ENCODE measurements at regions of chr1 and their contacts with region 1.

Region 1: DNA sequence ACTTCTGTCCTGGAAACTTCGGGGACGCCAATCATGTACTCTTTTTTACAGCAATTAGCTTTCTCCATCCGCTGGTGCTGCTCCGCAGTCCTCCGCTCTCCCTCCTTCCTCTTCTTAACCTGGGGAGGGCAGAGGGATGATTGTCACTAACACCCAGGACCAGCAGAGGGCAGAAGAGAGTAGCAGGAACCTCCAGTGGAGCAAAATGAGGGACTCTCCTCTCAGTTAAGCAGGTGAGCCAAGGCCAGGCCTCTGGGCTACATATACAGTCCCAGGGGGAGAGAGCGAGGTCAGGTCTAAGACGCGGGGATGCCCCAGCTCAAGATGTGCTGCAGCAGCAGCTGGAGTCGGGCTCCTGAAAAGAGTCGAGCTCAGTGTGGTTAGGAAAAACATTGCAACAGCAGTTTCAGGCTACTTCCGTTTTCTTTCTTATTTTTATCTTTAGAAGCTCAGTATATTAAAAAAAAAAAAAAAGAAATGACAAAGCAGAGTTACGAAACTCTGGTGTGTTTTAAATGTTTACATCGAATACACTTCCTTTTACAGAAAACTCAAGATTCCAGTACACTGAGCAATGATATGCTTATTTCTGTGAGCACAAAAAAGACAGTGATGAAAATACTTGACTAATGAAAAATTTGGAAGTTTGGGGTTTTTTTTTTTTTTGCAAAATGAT is 25.7 kb upstream of the NLRP3 start:
- DNase-seq: peak; percentile 96
- H3K4me3 Mint-ChIP-seq: peak overlapping the region; percentile 17
- H3K27ac Mint-ChIP-seq: peak overlapping the region; percentile 3
- H3K4me1 Mint-ChIP-seq: peaks cover 25% of the 10 kb centered on the region
- H3K27me3 Mint-ChIP-seq: no peaks in the 10 kb centered on the region
- CTCF ChIP-seq: peak; percentile 99

Region 2: DNA sequence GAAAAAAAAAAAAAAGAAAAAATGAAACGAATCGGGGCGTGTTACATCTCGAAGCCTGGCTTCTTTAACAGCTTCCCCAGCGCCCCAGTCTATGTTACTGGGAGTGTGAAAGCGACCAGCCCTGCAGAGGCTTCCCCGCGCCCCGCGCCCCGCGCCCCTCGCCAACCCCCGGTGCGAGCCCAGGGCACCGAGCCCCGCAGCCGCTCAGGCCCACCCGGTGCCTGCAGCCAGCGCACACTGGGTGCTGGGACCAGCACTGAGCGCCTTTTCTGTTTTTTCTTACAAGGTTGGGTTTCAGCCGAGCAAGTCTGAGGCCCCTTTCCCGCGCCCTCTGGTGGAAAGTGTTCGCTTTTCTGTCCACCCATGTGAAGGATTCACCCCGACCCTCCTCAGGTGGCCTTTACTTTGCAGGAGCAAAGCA is 16.5 kb before region 1 on chr1:
- CTCF ChIA-PET with region 1: interaction called, 143 read pairs
- POLR2A ChIA-PET with region 1: interaction called, 6 read pairs
- intact Hi-C with region 1: no loop called
- DNase-seq: peak; percentile 70
- H3K4me3 Mint-ChIP-seq: peak overlapping the region; percentile 3
- H3K27ac Mint-ChIP-seq: no peak overlapping the region
- H3K4me1 Mint-ChIP-seq: peaks cover 5% of the 10 kb centered on the region
- H3K27me3 Mint-ChIP-seq: no peaks in the 10 kb centered on the region
- CTCF ChIP-seq: peak; percentile 44

Region 3: GRCh38 chr1:247421074-247421473 is 30.8 kb after region 1 on chr1:
- CTCF ChIA-PET with region 1: interaction called, 58 read pairs
- POLR2A ChIA-PET with region 1: interaction called, 6 read pairs
- intact Hi-C with region 1: no loop called
- DNase-seq: peak; percentile 23
- H3K4me3 Mint-ChIP-seq: no peak overlapping the region
- H3K27ac Mint-ChIP-seq: peak overlapping the region; percentile 24
- H3K4me1 Mint-ChIP-seq: peaks cover 12% of the 10 kb centered on the region
- H3K27me3 Mint-ChIP-seq: no peaks in the 10 kb centered on the region
- CTCF ChIP-seq: no peak

Region 4: DNA sequence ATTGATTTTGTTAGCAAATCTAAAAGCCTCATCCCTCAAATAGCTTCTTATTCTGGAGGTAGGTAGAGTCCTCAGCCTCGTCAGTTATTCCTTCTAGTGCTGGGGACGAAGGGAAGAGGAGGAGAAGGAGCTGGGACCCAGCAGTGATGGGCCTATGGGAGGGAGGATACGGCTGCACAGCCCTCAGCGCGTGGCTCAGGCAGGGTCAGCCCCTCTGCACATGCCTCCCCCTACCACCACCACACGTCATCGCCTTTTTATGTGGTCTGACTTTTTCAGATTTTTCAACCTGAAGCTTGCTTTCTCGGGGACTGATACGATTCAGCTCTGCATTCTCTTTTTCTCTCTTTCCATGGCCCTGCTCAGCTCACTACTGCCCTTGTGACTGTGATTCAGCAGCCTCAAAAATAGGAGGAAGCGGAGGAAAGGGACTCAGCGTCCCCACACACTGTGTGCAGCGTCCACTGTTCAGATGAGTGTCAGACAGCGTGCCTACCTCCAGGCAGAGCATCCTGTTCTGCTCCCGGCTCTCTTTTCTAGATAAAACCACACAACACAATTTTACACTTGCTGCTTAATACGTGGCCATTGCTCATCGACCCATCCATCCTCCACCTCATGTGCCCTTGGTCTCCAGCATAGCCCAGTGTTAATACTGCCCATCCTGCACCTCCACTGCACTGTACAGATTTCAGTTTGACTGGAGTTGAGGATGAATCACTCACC is 66.8 kb after region 1 on chr1:
- CTCF ChIA-PET with region 1: interaction called, 42 read pairs
- POLR2A ChIA-PET with region 1: interaction called, 5 read pairs
- intact Hi-C with region 1: no loop called
- DNase-seq: no peak
- H3K4me3 Mint-ChIP-seq: no peak overlapping the region
- H3K27ac Mint-ChIP-seq: no peak overlapping the region
- H3K4me1 Mint-ChIP-seq: peaks cover 10% of the 10 kb centered on the region
- H3K27me3 Mint-ChIP-seq: peaks cover 21% of the 10 kb centered on the region
- CTCF ChIP-seq: no peak

Region 5: GRCh38 chr1:247487057-247487456 is 96.8 kb after region 1 on chr1:
- CTCF ChIA-PET with region 1: interaction called, 697 read pairs
- POLR2A ChIA-PET with region 1: interaction called, 34 read pairs
- intact Hi-C with region 1: loop called (anchors 1 kb)
- DNase-seq: peak; percentile 76
- H3K4me3 Mint-ChIP-seq: no peak overlapping the region
- H3K27ac Mint-ChIP-seq: no peak overlapping the region
- H3K4me1 Mint-ChIP-seq: peaks cover 11% of the 10 kb centered on the region
- H3K27me3 Mint-ChIP-seq: peaks cover 45% of the 10 kb centered on the region
- CTCF ChIP-seq: peak; percentile 84

Region 6: DNA sequence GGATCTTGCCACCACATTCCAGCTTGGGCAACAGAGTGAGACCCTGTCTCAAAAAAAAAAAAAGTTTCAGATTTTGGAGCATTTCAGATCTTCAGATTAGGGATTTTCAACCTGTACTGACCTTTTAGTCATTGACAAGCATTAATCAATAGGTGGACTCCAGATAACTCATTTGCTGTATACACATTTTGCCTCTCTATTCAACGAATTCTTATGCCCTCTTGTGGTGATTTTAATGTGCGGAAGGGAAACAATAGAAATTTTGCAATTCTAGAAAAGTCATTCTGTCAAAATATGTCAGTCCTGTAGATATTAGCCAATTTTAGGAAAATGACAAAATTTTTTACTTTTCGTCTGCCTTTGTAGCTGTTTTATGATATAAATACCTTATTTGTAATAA is 186.2 kb after region 1 on chr1:
- CTCF ChIA-PET with region 1: interaction called, 92 read pairs
- POLR2A ChIA-PET with region 1: no interaction called
- intact Hi-C with region 1: loop called (anchors 1 kb)
- DNase-seq: peak; percentile 49
- H3K4me3 Mint-ChIP-seq: no peak overlapping the region
- H3K27ac Mint-ChIP-seq: no peak overlapping the region
- H3K4me1 Mint-ChIP-seq: peaks cover 10% of the 10 kb centered on the region
- H3K27me3 Mint-ChIP-seq: no peaks in the 10 kb centered on the region
- CTCF ChIP-seq: peak; percentile 75

Measured in MCF 10A (cell line).